A549 (cell line): ENCODE measurements at regions of chrX and their contacts with region 1.

Region 1: GRCh38 chrX:71128915-71129765 is 10.7 kb downstream of the MED12 start:
- DNase-seq: peak; percentile 52 to 64
- ATAC-seq: peak; percentile 92 to 96
- H3K4me3 ChIP-seq: no peak overlapping the region
- H3K27ac ChIP-seq: no peak overlapping the region
- H3K4me1 ChIP-seq: no peaks in the 10 kb centered on the region; the same call in 2 of the 3 replicates
- CTCF ChIP-seq: peak; percentile 64
- EP300 ChIP-seq: no peak
- POLR2A ChIP-seq: no peak
- RAD21 ChIP-seq: peak; percentile 56 to 66

Region 2: GRCh38 chrX:70998411-70999027 is 130.6 kb before region 1 on chrX:
- CTCF ChIA-PET with region 1: interaction called, 18 read pairs
- POLR2A ChIA-PET with region 1: no interaction called
- DNase-seq: peak in 1 of 2 experiments; percentile 54
- ATAC-seq: peak in 1 of 2 experiments; percentile 75; a peak in 3 of 6 replicates
- H3K4me3 ChIP-seq: no peak overlapping the region
- H3K27ac ChIP-seq: no peak overlapping the region
- H3K4me1 ChIP-seq: no peaks in the 10 kb centered on the region
- CTCF ChIP-seq: peak; percentile 55
- EP300 ChIP-seq: no peak
- POLR2A ChIP-seq: no peak
- RAD21 ChIP-seq: peak; percentile 66 to 70

Region 3: DNA sequence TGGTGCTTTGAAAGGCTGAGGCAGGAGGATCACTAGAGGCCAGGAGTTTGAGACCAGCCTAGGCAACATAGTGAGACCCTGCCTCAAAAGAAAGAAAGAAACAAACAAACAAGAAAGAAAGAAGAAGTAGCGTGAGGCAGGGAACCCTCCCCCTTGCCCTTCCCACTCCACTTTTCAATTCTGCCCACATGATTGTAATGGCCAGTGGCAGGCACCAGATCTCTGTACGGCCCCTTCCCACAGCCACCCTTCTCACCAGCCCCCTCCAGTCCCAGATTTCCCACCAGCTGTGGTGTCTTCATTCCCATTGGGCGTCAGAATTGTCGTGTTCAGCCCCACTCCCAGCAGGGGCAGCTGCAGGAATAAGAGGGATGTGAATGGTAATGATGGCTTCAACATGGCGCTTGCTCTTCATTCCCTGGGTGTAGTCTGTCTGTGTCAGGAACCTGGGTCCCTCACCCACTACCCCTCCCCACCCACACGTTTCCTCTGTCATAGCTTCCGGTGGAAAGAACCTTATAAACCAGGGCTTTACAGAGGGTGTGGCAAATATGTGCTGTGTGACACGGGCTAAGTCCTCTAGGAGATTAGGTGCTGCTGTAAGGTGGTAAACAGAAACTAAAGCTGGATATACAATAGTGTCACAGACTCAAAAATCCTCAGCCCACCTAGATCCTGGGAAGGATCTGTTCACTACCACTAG is 17.8 kb before region 1 on chrX and contains the start of gene IL2RG:
- CTCF ChIA-PET with region 1: interaction called, 16 read pairs
- POLR2A ChIA-PET with region 1: no interaction called
- DNase-seq: no peak
- ATAC-seq: no peak
- H3K4me3 ChIP-seq: no peak within 1 kb of the TSS
- H3K27ac ChIP-seq: no peak within 1 kb of the TSS
- H3K4me1 ChIP-seq: no peaks in the 10 kb centered on the region
- CTCF ChIP-seq: no peak
- EP300 ChIP-seq: no peak
- POLR2A ChIP-seq: no peak
- RAD21 ChIP-seq: no peak
- polyA plus RNA-seq, gene IL2RG: 0.09 and 0.23 TPM in 2 replicates

Region 4: GRCh38 chrX:71118032-71118984 is 10.8 kb before region 1 on chrX and contains the start of gene MED12:
- CTCF ChIA-PET with region 1: interaction called, 25 read pairs
- POLR2A ChIA-PET with region 1: interaction called, 9 read pairs
- DNase-seq: peak; percentile 66 to 68
- ATAC-seq: peak; percentile 94 to 98
- H3K4me3 ChIP-seq: peak within 1 kb of the TSS; percentile 88
- H3K27ac ChIP-seq: peak within 1 kb of the TSS; percentile 98 to 99
- H3K4me1 ChIP-seq: peaks cover 8% of the 10 kb centered on the region; the same call in 2 of the 3 replicates
- CTCF ChIP-seq: no peak
- EP300 ChIP-seq: no peak
- POLR2A ChIP-seq: peak; percentile 61
- RAD21 ChIP-seq: no peak
- polyA plus RNA-seq, gene MED12: 12.6 and 35.0 TPM in 2 replicates

Region 5: DNA sequence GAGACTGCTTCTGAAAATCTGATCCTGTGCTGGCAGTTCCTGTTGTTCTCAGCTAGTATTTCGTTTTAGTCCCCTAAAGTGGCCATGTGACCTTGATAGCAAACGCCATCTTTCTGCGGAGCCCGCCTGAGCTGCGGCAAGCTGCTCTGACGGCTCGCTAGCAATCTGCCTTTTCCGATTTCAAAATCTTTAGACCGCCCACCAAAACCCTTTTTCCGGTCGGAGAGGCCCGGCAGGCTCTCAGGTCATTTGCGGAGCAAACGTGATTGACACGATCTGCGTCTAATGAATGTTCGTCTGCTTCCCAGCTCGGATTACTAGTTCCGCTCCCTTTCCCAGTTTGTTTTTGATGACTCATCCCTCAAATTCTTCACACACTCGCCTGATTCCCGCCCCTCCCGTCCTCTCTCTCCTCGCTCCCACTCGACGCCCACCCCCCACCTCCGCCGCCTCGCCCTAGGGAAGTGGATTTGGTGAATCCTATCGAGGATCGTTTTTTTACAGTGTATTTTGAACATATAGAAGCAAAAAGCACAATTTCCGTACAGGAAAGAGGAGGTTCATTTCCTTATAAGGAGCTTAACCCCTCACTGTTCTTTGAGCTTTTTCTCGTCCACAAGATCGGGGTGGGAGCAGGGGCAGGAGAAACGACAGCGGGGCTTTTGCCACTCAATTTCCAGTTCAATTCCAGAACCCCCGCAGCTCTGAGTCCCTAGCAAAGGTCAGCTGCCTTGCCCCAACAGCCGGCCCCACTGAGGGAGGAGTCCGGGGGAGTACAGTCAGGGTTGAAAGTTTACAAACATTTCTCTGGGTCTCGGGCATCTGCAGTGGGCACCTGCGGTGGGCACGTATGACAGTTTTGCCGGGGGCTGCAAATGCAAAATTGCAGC is 53.0 kb after region 1 on chrX:
- CTCF ChIA-PET with region 1: no interaction called
- POLR2A ChIA-PET with region 1: no interaction called
- DNase-seq: peak; percentile 85 to 98
- ATAC-seq: peak; percentile 97 to 98
- H3K4me3 ChIP-seq: peak overlapping the region; percentile 51
- H3K27ac ChIP-seq: peak overlapping the region; percentile 89 to 92
- H3K4me1 ChIP-seq: peaks cover 10% of the 10 kb centered on the region; the same call in 1 of the 3 replicates
- CTCF ChIP-seq: no peak
- EP300 ChIP-seq: no peak
- POLR2A ChIP-seq: peak; percentile 69
- RAD21 ChIP-seq: no peak

Region 6: GRCh38 chrX:71638409-71638808 is 509.3 kb after region 1 on chrX:
- CTCF ChIA-PET with region 1: no interaction called
- POLR2A ChIA-PET with region 1: no interaction called
- DNase-seq: no peak
- ATAC-seq: no peak
- H3K4me3 ChIP-seq: no peak overlapping the region
- H3K27ac ChIP-seq: no peak overlapping the region
- H3K4me1 ChIP-seq: no peaks in the 10 kb centered on the region
- CTCF ChIP-seq: no peak
- EP300 ChIP-seq: no peak
- POLR2A ChIP-seq: no peak
- RAD21 ChIP-seq: no peak